CD8-positive, alpha-beta T cell (primary cell): ENCODE measurements at regions of chr6 and their contacts with region 1.

Region 1: DNA sequence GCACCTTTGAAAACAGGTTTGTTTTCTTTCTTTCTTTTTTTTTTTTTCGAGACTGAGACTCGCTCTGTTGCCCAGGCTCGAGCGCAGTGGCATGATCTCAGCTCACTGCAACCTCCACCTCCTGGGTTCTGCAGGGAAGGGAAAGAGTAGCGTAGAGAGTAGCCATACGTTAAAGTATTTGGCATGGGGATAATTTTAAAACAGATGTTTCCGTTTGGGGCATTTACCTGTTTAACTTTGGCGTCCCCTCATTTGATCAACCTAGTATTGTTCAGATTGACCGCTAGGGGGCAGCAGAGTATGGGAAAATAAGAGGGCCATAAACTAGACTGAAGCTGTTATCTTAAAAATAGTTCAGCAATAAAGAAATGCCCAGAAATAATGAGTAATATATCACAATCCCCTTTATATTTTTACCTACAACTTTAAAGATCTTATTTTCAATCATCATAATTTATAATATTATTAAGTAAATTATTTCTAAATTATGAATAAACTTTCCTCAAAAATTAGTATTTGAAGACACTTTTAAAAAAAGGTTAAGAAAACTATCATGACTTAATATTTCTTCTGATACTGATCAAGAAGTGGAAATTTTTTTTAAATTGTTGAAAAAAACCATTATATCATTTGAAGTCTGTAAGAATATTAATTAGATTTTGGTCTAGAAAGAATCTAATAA is 7.6 kb upstream of the TAAR9 start:
- DNase-seq: peak; percentile 18 to 81 (median 76)
- ATAC-seq: peak; percentile 74
- H3K4me3 ChIP-seq: no peak overlapping the region
- H3K4me3 Mint-ChIP-seq: no peak overlapping the region
- H3K27ac ChIP-seq: no peak overlapping the region
- H3K27ac Mint-ChIP-seq: no peak overlapping the region
- H3K4me1 ChIP-seq: no peaks in the 10 kb centered on the region
- H3K4me1 Mint-ChIP-seq: peaks cover 3% of the 10 kb centered on the region
- H3K27me3 ChIP-seq: no peaks in the 10 kb centered on the region
- H3K27me3 Mint-ChIP-seq: peaks cover 19% of the 10 kb centered on the region
- CTCF ChIP-seq: peak; percentile 76

Region 2: DNA sequence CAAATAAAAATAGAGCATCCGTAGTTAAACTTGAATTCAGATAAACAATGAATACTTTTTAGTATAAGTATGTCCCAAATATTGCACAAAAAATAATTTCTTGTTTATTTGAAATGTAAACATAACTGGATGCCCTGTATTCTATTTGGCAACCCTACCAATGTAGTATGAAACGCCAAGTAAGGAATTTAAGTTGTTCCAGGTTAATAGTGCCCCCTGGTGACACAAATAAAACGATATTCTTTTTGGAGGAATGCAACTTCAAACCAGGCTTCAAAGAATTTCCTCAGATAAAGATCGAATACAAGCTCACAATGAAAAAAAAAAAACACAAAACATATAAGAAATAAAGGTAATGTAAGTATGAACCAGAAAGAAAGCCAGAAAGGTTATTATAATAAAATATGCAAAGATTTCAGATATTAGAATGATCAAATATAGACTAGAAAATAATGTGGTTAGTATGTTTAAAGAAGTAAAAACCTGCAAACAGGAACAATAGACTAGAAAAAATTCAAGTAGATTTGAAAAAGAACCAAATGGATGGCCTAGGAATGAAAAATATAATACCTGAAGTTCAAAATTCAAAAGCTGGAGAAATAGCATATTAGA is 1413.6 kb before region 1 on chr6:
- CTCF ChIA-PET with region 1: no interaction called
- POLR2A ChIA-PET with region 1: no interaction called
- intact Hi-C with region 1: no loop called
- DNase-seq: peak in 3 of 9 experiments; percentile 7 to 64 (median 54)
- ATAC-seq: no peak
- H3K4me3 ChIP-seq: no peak overlapping the region
- H3K4me3 Mint-ChIP-seq: no peak overlapping the region
- H3K27ac ChIP-seq: no peak overlapping the region
- H3K27ac Mint-ChIP-seq: no peak overlapping the region
- H3K4me1 ChIP-seq: no peaks in the 10 kb centered on the region
- H3K4me1 Mint-ChIP-seq: no peaks in the 10 kb centered on the region
- H3K27me3 ChIP-seq: no peaks in the 10 kb centered on the region
- H3K27me3 Mint-ChIP-seq: no peaks in the 10 kb centered on the region
- CTCF ChIP-seq: peak; percentile 60

Region 3: GRCh38 chr6:131787766-131788712 is 742.4 kb before region 1 on chr6:
- CTCF ChIA-PET with region 1: no interaction called
- POLR2A ChIA-PET with region 1: no interaction called
- intact Hi-C with region 1: no loop called
- DNase-seq: no peak
- ATAC-seq: no peak
- H3K4me3 ChIP-seq: no peak overlapping the region
- H3K4me3 Mint-ChIP-seq: no peak overlapping the region
- H3K27ac ChIP-seq: no peak overlapping the region
- H3K27ac Mint-ChIP-seq: no peak overlapping the region
- H3K4me1 ChIP-seq: no peaks in the 10 kb centered on the region
- H3K4me1 Mint-ChIP-seq: peaks cover 3% of the 10 kb centered on the region
- H3K27me3 ChIP-seq: no peaks in the 10 kb centered on the region
- H3K27me3 Mint-ChIP-seq: peaks cover 13% of the 10 kb centered on the region
- CTCF ChIP-seq: no peak

Region 4: DNA sequence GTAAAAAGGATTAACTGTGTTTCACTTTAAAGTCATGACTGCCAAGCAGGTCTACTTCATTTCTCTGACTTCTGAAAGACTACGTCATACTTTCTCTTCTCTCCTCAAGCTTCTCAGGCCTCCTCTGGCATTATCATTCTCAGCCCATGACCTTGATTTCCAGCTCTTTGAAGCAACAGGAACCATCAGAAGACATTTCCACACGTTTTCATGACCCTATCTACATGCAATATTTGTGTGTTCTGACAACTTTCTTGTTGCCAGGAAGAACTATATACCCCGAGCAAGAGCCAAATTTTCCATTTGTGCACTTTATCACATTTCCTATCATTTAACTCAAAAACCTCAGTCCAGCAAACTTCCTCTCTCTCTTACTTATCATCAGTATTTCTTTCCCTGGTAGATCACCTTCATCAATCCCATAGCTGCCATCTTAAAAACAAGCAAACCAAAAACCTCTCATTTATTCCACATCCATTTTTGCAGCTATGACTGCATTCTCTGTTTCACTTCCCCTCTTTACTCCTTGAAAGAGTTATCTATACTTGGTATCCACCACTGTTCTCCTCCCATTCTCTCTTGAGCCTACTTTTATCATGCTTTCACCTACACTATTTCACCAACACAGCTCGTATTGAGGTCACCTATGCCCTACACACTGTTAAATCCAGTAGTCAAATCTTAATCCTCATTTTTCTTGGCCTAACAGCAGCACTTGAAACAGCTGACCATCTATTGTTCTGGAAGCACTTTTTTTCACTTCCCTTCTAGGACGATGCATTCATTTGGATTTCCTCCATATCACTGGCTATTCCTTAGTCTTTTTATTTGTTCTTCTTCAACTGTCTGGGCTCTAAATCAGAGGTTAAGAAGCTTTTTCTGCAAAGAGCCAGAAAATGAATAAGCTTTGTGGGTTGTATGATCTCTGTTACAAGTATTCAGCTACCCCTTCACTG is 64.6 kb before region 1 on chr6:
- CTCF ChIA-PET with region 1: no interaction called
- POLR2A ChIA-PET with region 1: no interaction called
- intact Hi-C with region 1: no loop called
- DNase-seq: no peak
- ATAC-seq: no peak
- H3K4me3 ChIP-seq: no peak overlapping the region
- H3K4me3 Mint-ChIP-seq: no peak overlapping the region
- H3K27ac ChIP-seq: no peak overlapping the region
- H3K27ac Mint-ChIP-seq: no peak overlapping the region
- H3K4me1 ChIP-seq: no peaks in the 10 kb centered on the region
- H3K4me1 Mint-ChIP-seq: no peaks in the 10 kb centered on the region
- H3K27me3 ChIP-seq: no peaks in the 10 kb centered on the region
- H3K27me3 Mint-ChIP-seq: no peaks in the 10 kb centered on the region
- CTCF ChIP-seq: no peak

Region 5: DNA sequence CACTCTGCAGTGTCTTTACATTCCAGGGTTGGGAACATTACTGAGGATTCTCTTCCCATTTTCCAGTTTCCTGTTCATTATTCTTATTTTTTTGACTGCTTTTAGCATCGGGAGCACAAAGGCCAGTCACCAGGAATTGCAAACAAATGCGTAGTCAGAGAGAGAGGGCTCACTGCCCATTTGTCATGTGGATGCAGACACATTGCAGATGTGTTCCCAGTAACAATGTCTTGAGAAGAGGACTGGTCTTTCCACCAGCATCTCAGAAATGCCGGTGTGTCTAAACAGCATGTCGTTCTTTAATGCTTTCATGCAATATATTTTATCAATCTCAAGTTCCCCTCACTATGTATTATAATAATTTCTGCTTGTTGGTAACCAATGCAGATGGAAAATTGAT is 38.7 kb after region 1 on chr6:
- CTCF ChIA-PET with region 1: no interaction called
- POLR2A ChIA-PET with region 1: no interaction called
- intact Hi-C with region 1: no loop called
- DNase-seq: no peak
- ATAC-seq: no peak
- H3K4me3 ChIP-seq: no peak overlapping the region
- H3K4me3 Mint-ChIP-seq: no peak overlapping the region
- H3K27ac ChIP-seq: no peak overlapping the region
- H3K27ac Mint-ChIP-seq: no peak overlapping the region
- H3K4me1 ChIP-seq: no peaks in the 10 kb centered on the region
- H3K4me1 Mint-ChIP-seq: no peaks in the 10 kb centered on the region
- H3K27me3 ChIP-seq: no peaks in the 10 kb centered on the region
- H3K27me3 Mint-ChIP-seq: peaks cover 26% of the 10 kb centered on the region
- CTCF ChIP-seq: no peak

Region 6: DNA sequence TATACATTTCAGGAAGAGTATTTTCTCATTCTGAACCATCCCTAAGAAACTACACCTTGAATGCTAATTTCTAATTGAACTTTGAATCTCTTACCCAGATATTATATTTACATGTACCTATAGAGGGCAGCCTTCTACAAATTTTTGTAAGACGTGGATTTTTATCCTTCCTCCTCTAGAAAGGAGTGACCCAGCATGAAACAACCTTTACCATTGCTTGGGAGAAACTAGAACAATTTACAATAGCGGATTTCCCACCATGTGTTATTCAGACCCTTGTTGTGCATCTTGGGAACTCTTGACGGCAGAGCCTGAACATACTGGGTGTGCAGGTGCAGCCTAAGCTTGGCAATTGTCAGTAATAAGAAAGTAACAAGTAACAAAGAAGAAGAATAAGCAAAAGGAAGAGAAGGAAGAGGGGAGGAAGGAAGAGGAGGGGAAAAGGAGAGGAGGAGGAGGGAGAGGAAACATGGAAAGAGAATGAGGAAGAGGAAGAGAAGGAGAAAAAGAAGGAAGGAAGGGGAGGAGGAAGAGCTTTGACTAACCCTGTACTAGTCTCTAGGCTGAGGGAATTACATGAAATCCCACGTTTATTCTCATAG is 139.4 kb after region 1 on chr6:
- CTCF ChIA-PET with region 1: no interaction called
- POLR2A ChIA-PET with region 1: no interaction called
- intact Hi-C with region 1: loop called in 1 of 2 experiments (anchors 10 kb)
- DNase-seq: peak in 2 of 9 experiments; percentile 30 to 48
- ATAC-seq: peak; percentile 46
- H3K4me3 ChIP-seq: no peak overlapping the region
- H3K4me3 Mint-ChIP-seq: no peak overlapping the region
- H3K27ac ChIP-seq: no peak overlapping the region
- H3K27ac Mint-ChIP-seq: no peak overlapping the region
- H3K4me1 ChIP-seq: peaks cover 3% of the 10 kb centered on the region
- H3K4me1 Mint-ChIP-seq: peaks cover 2% of the 10 kb centered on the region
- H3K27me3 ChIP-seq: no peaks in the 10 kb centered on the region
- H3K27me3 Mint-ChIP-seq: peaks cover 7% of the 10 kb centered on the region
- CTCF ChIP-seq: peak; percentile 67

Region 7: GRCh38 chr6:132780770-132781371 is 250.4 kb after region 1 on chr6:
- CTCF ChIA-PET with region 1: no interaction called
- POLR2A ChIA-PET with region 1: no interaction called
- intact Hi-C with region 1: loop called in 1 of 2 experiments (anchors 5 kb)
- DNase-seq: peak in 2 of 9 experiments; percentile 22 to 34
- ATAC-seq: peak; percentile 63
- H3K4me3 ChIP-seq: no peak overlapping the region
- H3K4me3 Mint-ChIP-seq: no peak overlapping the region
- H3K27ac ChIP-seq: no peak overlapping the region
- H3K27ac Mint-ChIP-seq: no peak overlapping the region
- H3K4me1 ChIP-seq: no peaks in the 10 kb centered on the region
- H3K4me1 Mint-ChIP-seq: no peaks in the 10 kb centered on the region
- H3K27me3 ChIP-seq: no peaks in the 10 kb centered on the region
- H3K27me3 Mint-ChIP-seq: no peaks in the 10 kb centered on the region
- CTCF ChIP-seq: peak; percentile 23

Region 8: DNA sequence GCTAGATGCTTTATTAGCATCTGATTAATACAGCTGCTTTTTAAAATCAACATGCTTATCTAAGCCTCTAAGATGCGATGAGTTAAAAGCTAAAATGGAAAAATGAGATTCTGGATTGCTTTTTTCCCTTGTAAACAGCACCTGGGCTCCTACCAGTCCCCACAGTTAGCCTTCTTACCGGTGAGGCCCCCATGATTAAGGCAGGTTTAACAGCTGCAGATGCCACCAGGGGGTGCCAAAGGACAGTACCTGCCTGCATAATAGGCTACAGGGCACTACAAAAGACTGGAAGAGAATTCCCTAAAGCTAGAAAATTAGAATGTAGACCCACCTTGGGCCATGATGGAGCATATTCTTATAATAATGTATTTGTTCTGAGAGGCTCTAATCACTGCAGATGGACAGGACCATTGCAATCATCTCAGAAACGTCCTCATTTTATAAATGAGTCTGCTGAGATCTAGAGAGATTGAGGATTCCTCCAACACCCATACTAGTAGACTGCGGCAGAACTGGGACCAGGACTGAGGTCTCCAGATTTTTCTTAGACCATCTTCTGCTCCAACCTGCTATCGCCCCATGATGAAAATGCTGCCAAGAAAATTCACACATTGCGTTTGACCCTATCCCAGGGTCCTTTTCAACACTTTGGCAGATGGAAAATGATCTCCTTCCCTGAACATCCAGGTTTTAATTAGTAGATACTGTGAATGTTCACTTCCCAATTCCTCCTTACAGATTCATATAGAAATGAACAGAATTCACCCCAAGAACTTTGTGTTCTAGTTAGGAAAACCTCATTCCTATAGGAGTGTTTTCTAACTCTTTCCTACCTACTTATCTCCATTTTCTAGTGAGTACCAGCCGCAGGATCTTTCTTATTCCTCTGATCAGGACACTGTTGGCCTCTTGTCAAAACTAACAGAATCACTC is 432.8 kb after region 1 on chr6:
- CTCF ChIA-PET with region 1: no interaction called
- POLR2A ChIA-PET with region 1: no interaction called
- intact Hi-C with region 1: loop called in 1 of 2 experiments (anchors 5 kb)
- DNase-seq: peak; percentile 5 to 58 (median 38)
- ATAC-seq: peak; percentile 44
- H3K4me3 ChIP-seq: no peak overlapping the region
- H3K4me3 Mint-ChIP-seq: no peak overlapping the region
- H3K27ac ChIP-seq: no peak overlapping the region
- H3K27ac Mint-ChIP-seq: no peak overlapping the region
- H3K4me1 ChIP-seq: no peaks in the 10 kb centered on the region
- H3K4me1 Mint-ChIP-seq: no peaks in the 10 kb centered on the region
- H3K27me3 ChIP-seq: no peaks in the 10 kb centered on the region
- H3K27me3 Mint-ChIP-seq: peaks cover 29% of the 10 kb centered on the region
- CTCF ChIP-seq: peak; percentile 70

Region 9: GRCh38 chr6:133553652-133554051 is 1023.2 kb after region 1 on chr6:
- CTCF ChIA-PET with region 1: interaction called, 9 read pairs
- POLR2A ChIA-PET with region 1: no interaction called
- intact Hi-C with region 1: loop called in 1 of 2 experiments (anchors 1 kb)
- DNase-seq: peak in 2 of 9 experiments; percentile 39 to 50
- ATAC-seq: no peak
- H3K4me3 ChIP-seq: no peak overlapping the region
- H3K4me3 Mint-ChIP-seq: no peak overlapping the region
- H3K27ac ChIP-seq: no peak overlapping the region
- H3K27ac Mint-ChIP-seq: no peak overlapping the region
- H3K4me1 ChIP-seq: no peaks in the 10 kb centered on the region
- H3K4me1 Mint-ChIP-seq: no peaks in the 10 kb centered on the region
- H3K27me3 ChIP-seq: no peaks in the 10 kb centered on the region
- H3K27me3 Mint-ChIP-seq: peaks cover 3% of the 10 kb centered on the region
- CTCF ChIP-seq: peak; percentile 36